Prostate gland (tissue), 2 donors: ENCODE measurements at regions of chr3 and their contacts with region 1.

Region 1: GRCh38 chr3:128725932-128726690 is at the start of gene RAB7A:
- DNase-seq: peak; percentile 98
- H3K4me3 ChIP-seq: peak within 1 kb of the TSS; percentile 99 to 100
- H3K27ac ChIP-seq: peak within 1 kb of the TSS; percentile 97
- H3K4me1 ChIP-seq: peaks cover 2% of the 10 kb centered on the region
- H3K27me3 ChIP-seq: no peaks in the 10 kb centered on the region
- CTCF ChIP-seq: peak in 3 of 4 experiments; percentile 10 to 27 (median 18)
- POLR2A ChIP-seq: peak; percentile 96
- total RNA-seq, gene RAB7A: 88.2 to 125 TPM

Region 2: DNA sequence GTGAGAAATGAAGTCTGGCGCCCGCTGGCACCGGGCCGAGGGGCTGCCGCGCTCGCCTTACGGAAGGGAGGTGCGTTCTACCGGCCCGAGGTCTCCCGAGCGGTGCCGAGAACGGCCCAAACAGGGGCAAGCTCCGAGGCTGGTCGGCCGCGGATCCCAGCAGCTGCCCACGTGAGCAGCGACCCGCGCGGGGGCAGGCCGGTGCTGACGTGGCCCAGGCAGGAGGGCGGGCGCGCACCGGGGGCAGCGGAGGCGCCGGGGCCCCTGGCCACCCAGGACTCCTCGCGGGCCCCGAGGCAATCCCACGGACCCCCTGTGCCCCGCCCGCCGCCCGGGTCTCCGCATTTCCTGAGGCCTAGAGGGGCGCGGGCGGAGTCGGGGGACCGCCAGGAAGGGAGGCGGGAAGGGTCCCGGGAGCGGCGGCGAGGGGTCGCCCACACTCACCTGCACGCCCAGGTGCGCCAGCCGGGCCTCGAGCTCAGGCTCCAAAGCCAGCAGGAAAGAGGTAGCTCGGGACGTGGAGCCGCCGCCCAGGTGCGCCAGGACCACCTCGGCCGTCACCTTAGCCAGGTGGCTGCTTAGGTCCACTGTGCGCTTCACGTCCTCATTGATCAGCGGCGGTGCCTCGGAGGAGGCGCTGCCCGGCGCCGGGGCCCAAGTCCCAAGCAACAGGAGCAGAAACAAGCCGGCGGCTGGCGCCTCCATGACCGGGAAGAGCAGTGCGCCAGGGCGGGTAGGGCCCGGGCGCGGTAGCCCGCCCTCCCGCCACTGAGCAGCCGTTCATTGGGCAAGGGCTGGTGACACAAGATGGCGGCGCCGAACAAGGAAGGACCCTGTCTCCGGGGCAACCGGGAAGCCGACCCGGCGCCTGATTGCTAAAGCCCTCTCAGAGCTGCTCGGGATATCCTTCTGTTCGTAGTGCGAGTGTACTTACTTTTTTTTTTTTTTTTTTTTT is 75.7 kb before region 1 on chr3 and contains the start of gene RPN1:
- intact Hi-C with region 1: loop called (anchors 2 kb)
- DNase-seq: peak; percentile 96
- H3K4me3 ChIP-seq: peak within 1 kb of the TSS; percentile 78 to 96
- H3K27ac ChIP-seq: peak within 1 kb of the TSS; percentile 92 to 96
- H3K4me1 ChIP-seq: peaks cover 4% of the 10 kb centered on the region
- H3K27me3 ChIP-seq: no peaks in the 10 kb centered on the region
- CTCF ChIP-seq: peak in 1 of 4 experiments; percentile 9
- POLR2A ChIP-seq: peak; percentile 84
- total RNA-seq, gene RPN1: 291 to 359 TPM

Region 3: DNA sequence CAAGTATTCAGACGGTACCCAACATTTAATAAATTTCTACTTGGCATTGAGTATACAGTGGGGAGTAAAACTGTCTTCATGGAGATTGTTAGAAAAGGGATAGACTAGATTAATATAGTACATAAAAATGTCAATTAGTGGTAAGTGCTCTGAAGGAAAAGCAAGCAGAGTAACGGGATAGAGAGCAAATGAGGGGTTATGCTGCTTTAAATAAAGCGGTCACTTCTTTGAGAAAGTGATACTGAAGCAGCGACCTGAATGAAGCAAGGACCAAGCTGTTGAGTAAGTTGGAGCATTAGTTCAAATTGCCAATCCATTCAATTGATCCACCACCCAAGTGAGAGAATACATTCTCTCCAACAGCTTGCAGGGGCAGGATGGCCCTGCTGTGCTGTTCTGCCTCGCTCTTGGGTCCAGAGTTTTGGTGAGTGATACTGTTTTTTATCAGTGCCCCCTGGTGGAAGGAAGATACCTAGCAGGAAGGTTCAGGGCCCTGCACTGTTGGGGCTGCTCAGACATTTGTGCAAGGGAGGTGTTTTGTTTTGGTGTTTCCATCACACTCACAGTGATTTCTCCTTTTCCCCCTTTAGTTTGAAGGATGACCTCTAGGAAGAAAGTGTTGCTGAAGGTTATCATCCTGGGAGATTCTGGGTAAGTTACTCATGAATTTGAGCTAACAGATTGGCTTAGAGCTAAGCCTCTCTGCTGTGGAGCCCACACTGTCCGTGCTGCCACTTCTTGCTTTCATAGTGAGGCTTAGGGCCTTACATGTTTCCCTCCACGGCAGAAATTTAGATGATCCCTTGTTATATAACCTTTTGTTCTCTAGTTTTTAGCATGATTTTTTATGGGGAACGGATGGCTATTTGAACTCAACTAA is 68.9 kb after region 1 on chr3:
- intact Hi-C with region 1: loop called (anchors 5 kb)
- DNase-seq: peak; percentile 63
- H3K4me3 ChIP-seq: no peak overlapping the region
- H3K27ac ChIP-seq: peak overlapping the region in 1 of 2 donors; percentile 1
- H3K4me1 ChIP-seq: no peaks in the 10 kb centered on the region
- H3K27me3 ChIP-seq: no peaks in the 10 kb centered on the region
- CTCF ChIP-seq: peak; percentile 53 to 87 (median 84)
- POLR2A ChIP-seq: no peak

Region 4: DNA sequence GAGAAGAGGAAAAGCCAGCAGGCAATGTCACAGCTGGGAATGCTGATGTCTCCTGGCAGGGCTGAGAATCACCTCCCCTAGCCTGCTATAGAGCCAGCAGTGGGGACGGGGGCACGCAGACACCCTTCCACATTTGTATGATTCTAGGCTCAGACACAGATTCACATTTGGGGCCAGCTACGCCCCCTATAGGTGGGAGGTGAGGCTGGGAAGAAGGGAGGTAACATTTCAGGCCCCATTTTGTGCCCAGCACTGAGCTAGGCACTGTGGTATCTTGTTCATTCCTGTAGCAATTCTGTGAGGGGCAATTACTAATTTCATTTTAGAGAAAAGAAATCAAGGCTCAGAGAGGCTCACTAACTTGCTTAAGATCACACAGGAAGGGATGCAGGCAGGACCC is 137.4 kb after region 1 on chr3:
- intact Hi-C with region 1: no loop called
- DNase-seq: no peak
- H3K4me3 ChIP-seq: no peak overlapping the region
- H3K27ac ChIP-seq: no peak overlapping the region
- H3K4me1 ChIP-seq: no peaks in the 10 kb centered on the region
- H3K27me3 ChIP-seq: no peaks in the 10 kb centered on the region
- CTCF ChIP-seq: no peak
- POLR2A ChIP-seq: no peak